ENCODE measurements at regions of chr6 and their contacts with region 1.

Region 1: GRCh38 chr6:12943549-12943948 is 227.0 kb downstream of the PHACTR1 start:
- DNase-seq: no peak
- H3K4me3 ChIP-seq: no peak overlapping the region
- H3K27ac ChIP-seq: no peak overlapping the region
- H3K4me1 ChIP-seq: no peaks in the 10 kb centered on the region
- H3K27me3 ChIP-seq: no peaks in the 10 kb centered on the region
- CTCF ChIP-seq: no peak
- POLR2A ChIP-seq: no peak

Region 2: DNA sequence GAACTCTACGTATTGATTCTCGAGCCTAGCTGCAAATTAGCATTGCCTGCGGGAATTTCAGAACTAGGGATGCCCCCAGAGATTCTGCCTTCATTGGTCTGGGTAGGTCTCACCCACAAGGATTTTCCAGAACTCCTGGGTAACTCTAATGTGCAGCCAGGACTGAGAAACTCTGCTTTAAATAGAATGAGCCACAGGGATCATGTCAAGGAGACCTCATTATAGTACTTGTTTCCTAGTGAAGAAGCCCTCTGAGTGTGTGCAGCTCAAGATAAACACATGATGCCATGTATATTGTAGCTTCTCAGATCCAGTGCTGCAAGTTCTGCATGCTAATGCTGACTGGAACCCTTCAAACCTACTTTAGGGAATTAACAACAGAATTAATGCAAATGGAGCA is 47.8 kb before region 1 on chr6:
- intact Hi-C with region 1: loop called (anchors 2 kb)
- DNase-seq: no peak
- H3K4me3 ChIP-seq: no peak overlapping the region
- H3K27ac ChIP-seq: no peak overlapping the region
- H3K4me1 ChIP-seq: no peaks in the 10 kb centered on the region
- H3K27me3 ChIP-seq: no peaks in the 10 kb centered on the region
- CTCF ChIP-seq: no peak
- POLR2A ChIP-seq: no peak

Measured in breast epithelium (tissue), 4 donors.